ENCODE measurements at regions of chr14 and their contacts with region 1.

Region 1: DNA sequence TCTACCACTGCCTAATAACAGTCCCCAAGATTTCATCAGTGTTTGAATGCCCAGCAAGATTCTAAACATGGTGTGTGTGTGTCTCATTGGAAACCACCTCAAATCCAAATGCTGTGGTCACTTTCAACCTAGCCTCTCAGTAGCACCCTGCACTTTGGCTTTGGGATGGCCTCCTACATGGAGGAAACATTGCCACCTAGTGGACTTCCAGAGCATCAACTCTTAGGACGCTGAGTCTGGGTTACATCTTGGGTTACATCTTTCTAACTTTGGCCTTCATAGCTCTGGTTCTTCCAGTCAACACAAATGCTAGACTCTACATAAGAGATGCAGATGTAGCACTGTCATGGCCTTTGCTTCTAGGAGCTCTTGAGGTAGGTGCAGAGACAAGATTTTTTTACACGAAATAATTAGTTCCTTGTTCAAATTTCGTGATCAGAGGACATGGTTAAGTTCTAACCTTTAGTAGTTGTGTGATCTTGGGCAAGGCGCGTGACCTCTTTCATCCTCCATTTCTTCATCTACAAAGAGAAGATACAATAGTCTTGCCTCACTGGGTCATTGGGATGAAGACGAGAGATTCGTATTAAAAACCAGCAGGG is 113.5 kb upstream of the VASH1 start:
- DNase-seq: peak; percentile 52
- ATAC-seq: peak; percentile 75
- H3K4me3 ChIP-seq: no peak overlapping the region
- H3K27ac ChIP-seq: no peak overlapping the region
- H3K4me1 ChIP-seq: peaks cover 14% of the 10 kb centered on the region
- H3K27me3 ChIP-seq: peaks cover 0 to 10% of the 10 kb centered on the region in 2 experiments; a peak in 3 of 5 replicates
- CTCF ChIP-seq: peak; percentile 78
- EP300 ChIP-seq: no peak
- POLR2A ChIP-seq: no peak
- RAD21 ChIP-seq: 0 out of 2 replicates have a peak, but pooled peaks have one; percentile 22

Region 2: DNA sequence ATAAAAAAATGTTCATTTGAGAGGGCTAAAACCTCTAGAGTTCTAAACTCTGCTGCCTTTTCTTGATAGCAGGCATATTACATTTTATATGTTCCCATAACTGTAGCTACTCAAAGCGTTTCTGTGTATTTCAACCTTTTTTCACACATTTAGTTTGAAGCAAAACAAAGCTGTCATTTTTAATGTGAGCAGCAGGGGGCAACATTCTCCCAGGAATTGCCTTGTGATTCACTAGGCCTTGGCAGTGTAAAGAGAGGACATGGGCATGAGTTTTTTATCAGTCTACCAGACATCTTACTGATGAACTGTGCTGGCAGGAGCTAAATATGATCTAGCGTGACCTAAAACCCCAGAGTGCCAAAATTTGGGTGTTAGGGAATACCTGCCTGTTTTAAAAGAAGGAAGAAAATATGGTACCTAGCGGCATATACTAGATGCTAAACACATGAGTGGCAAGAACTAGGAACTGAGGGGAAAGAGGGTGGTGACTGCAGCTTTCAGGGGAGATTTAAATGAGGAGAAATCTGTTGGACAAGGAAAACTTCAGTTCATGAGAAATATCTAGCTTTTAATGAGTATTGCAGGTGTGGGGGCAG is 596.9 kb before region 1 on chr14:
- CTCF ChIA-PET with region 1: interaction called, 13 read pairs
- POLR2A ChIA-PET with region 1: no interaction called
- in situ Hi-C with region 1: loop called (anchors 5 kb)
- intact Hi-C with region 1: loop called (anchors 2 kb)
- DNase-seq: peak; percentile 47
- ATAC-seq: peak; percentile 62
- H3K4me3 ChIP-seq: no peak overlapping the region
- H3K27ac ChIP-seq: no peak overlapping the region
- H3K4me1 ChIP-seq: no peaks in the 10 kb centered on the region
- H3K27me3 ChIP-seq: peaks cover 0 to 10% of the 10 kb centered on the region in 2 experiments; a peak in 2 of 5 replicates
- CTCF ChIP-seq: peak; percentile 83
- EP300 ChIP-seq: no peak
- POLR2A ChIP-seq: no peak
- RAD21 ChIP-seq: peak; percentile 78

Region 3: GRCh38 chr14:76456200-76456599 is 191.6 kb before region 1 on chr14:
- CTCF ChIA-PET with region 1: interaction called, 7 read pairs
- POLR2A ChIA-PET with region 1: no interaction called
- in situ Hi-C with region 1: no loop called
- intact Hi-C with region 1: loop called (anchors 1 kb)
- DNase-seq: peak; percentile 18
- ATAC-seq: peak; percentile 76
- H3K4me3 ChIP-seq: no peak overlapping the region
- H3K27ac ChIP-seq: no peak overlapping the region
- H3K4me1 ChIP-seq: no peaks in the 10 kb centered on the region
- H3K27me3 ChIP-seq: no peaks in the 10 kb centered on the region
- CTCF ChIP-seq: peak; percentile 58
- EP300 ChIP-seq: no peak
- POLR2A ChIP-seq: no peak
- RAD21 ChIP-seq: no peak

Region 4: DNA sequence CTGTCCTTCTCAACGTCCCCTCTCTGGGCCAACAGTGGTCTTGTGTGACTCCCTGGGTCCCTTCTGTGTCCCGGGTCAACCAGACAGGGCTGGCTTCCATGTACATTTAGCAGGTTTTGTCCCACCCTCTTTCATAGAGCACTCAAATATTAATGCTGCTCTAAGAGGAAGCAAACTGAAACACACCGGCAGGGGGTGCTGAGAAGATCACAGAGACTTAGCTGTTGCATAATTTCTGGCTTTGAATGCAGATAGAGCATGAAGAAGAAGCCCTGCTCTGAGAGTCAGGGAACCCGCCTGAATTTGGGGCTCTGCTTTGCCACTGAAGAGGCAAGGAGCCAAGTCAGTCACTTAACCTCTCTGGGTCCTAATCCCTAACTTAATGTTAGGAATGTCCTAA is 133.2 kb before region 1 on chr14:
- CTCF ChIA-PET with region 1: interaction called, 12 read pairs
- POLR2A ChIA-PET with region 1: no interaction called
- in situ Hi-C with region 1: loop called (anchors 5 kb)
- intact Hi-C with region 1: loop called (anchors 1 kb)
- DNase-seq: peak; percentile 58
- ATAC-seq: peak; percentile 76
- H3K4me3 ChIP-seq: no peak overlapping the region
- H3K27ac ChIP-seq: no peak overlapping the region
- H3K4me1 ChIP-seq: no peaks in the 10 kb centered on the region
- H3K27me3 ChIP-seq: peaks cover 0 to 13% of the 10 kb centered on the region in 2 experiments; a peak in 3 of 5 replicates
- CTCF ChIP-seq: peak; percentile 61
- EP300 ChIP-seq: no peak
- POLR2A ChIP-seq: no peak
- RAD21 ChIP-seq: no peak

Region 5: GRCh38 chr14:76742966-76743365 is 95.2 kb after region 1 on chr14:
- CTCF ChIA-PET with region 1: no interaction called
- POLR2A ChIA-PET with region 1: no interaction called
- in situ Hi-C with region 1: no loop called
- intact Hi-C with region 1: no loop called
- DNase-seq: no peak
- ATAC-seq: no peak
- H3K4me3 ChIP-seq: no peak overlapping the region
- H3K27ac ChIP-seq: no peak overlapping the region
- H3K4me1 ChIP-seq: no peaks in the 10 kb centered on the region
- H3K27me3 ChIP-seq: no peaks in the 10 kb centered on the region; a peak in 1 of 5 replicates
- CTCF ChIP-seq: no peak
- EP300 ChIP-seq: no peak
- POLR2A ChIP-seq: no peak
- RAD21 ChIP-seq: no peak